ENCODE measurements at regions of chr16 and their contacts with region 1.

Region 1: DNA sequence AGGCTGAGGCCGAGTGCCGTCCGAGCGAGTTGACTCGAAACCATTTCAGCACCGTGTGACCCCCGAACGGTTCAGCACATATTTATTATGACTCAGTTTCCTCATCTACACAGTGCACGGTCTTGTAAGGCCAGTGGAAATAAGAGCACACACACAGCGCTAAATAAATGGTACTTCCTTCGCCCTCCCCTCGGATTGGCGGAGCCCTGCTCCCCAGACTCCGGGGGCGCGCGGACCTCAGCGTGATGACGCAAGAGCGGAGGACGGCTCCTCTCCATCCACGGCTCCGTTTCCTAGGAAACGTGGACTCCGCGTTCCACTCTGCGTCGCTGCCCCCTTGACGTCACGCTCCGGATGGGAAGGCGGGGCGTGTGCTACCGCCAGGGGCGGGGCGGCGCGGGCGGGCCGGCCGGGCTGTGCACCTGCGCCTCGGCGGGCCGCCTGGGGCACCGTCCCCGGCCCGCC is at the start of gene PARD6A:
- DNase-seq: peak; percentile 95 to 98 (median 97)
- H3K4me3 ChIP-seq: peak within 1 kb of the TSS; percentile 47 to 73 (median 68)
- H3K27ac ChIP-seq: peak within 1 kb of the TSS; percentile 71 to 96 (median 91)
- H3K4me1 ChIP-seq: peaks cover 8 to 15% of the 10 kb centered on the region in 2 donors
- H3K27me3 ChIP-seq: no peaks in the 10 kb centered on the region
- CTCF ChIP-seq: peak in 1 of 6 experiments; percentile 34
- POLR2A ChIP-seq: peak in 1 of 2 donors; percentile 30
- total RNA-seq, gene PARD6A: 1.9 to 49.1 (median 9.3) TPM

Region 2: GRCh38 chr16:67546761-67547422 is 113.7 kb before region 1 on chr16:
- intact Hi-C with region 1: loop called in 1 of 2 experiments (anchors 5 kb)
- DNase-seq: peak; percentile 65 to 87 (median 80)
- H3K4me3 ChIP-seq: no peak overlapping the region
- H3K27ac ChIP-seq: peak overlapping the region in 2 of 5 donors; percentile 1 to 53
- H3K4me1 ChIP-seq: peaks cover 0 to 14% of the 10 kb centered on the region in 2 donors
- H3K27me3 ChIP-seq: no peaks in the 10 kb centered on the region
- CTCF ChIP-seq: peak; percentile 86 to 95 (median 93)
- POLR2A ChIP-seq: no peak

Region 3: DNA sequence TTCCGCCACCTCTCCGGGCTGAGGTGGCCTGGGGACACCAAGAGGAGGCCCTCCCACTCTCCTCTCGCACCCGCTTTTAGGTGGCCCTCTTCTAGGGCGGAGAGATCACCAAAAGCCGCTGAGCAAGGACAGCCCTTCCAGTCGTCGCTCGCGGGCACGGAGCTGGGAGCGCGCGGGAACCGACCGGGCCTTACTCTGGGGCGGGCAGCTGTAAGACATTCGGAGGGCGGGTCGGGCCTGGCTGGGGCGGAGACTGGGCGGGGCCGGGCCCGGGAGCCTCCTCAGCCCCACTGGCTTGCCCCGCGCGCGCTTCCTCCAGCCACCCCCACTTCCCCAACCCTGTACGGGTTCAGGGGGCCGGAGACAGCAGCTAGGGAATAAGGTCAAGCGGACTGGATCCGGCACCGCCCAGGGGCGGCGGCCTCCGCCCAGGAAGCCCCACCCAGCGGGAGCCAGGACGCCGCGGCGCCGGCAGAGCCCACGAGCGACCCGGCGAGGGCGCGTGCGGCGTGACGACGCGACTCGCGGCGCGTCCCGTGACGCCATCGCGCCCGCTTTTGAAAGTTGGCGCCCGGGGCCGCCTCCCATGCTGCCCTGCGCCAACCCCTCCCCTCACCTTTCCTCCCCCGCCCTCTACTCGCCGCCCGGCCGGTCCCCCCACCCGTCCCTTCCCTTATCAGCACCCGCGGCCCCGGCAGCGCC is 98.6 kb before region 1 on chr16:
- intact Hi-C with region 1: loop called (anchors 5 kb)
- DNase-seq: peak; percentile 96 to 98 (median 97)
- H3K4me3 ChIP-seq: peak overlapping the region in 3 of 4 donors; percentile 13 to 99 (median 85)
- H3K27ac ChIP-seq: peak overlapping the region; percentile 73 to 99 (median 99)
- H3K4me1 ChIP-seq: peaks cover 6 to 21% of the 10 kb centered on the region in 2 donors
- H3K27me3 ChIP-seq: no peaks in the 10 kb centered on the region
- CTCF ChIP-seq: no peak
- POLR2A ChIP-seq: peak in 1 of 2 donors; percentile 74

Measured in adrenal gland (tissue), 19 donors.